H1 (cell line): ENCODE measurements at regions of chr10 and their contacts with region 1.

Region 1: DNA sequence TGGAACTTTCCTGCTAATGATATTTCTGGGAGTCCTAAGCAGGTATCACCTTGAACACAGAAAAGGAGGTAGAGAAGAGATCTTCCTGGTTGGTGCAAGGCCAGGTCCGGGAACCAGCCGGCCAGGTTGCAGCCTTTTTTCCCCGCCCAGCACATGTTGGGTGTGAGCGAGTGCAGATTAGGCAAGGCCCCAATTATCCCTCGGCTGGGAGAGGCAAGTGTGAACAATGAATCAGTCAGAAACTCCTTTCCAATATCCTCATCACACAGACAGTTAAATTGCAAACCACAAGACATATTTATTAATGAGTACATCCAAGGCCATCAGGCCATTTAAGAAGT is 115.0 kb upstream of the AFAP1L2 start:
- DNase-seq: no peak
- H3K4me3 ChIP-seq: no peak overlapping the region
- H3K27ac ChIP-seq: no peak overlapping the region
- H3K4me1 ChIP-seq: peaks cover 4 to 21% (median 9%) of the 10 kb centered on the region in 4 experiments
- H3K27me3 ChIP-seq: peaks cover 0 to 1% (median 0%) of the 10 kb centered on the region in 4 experiments; a peak in 1 of 7 replicates
- CTCF ChIP-seq: no peak
- EP300 ChIP-seq: no peak
- POLR2A ChIP-seq: no peak
- RAD21 ChIP-seq: no peak

Region 2: DNA sequence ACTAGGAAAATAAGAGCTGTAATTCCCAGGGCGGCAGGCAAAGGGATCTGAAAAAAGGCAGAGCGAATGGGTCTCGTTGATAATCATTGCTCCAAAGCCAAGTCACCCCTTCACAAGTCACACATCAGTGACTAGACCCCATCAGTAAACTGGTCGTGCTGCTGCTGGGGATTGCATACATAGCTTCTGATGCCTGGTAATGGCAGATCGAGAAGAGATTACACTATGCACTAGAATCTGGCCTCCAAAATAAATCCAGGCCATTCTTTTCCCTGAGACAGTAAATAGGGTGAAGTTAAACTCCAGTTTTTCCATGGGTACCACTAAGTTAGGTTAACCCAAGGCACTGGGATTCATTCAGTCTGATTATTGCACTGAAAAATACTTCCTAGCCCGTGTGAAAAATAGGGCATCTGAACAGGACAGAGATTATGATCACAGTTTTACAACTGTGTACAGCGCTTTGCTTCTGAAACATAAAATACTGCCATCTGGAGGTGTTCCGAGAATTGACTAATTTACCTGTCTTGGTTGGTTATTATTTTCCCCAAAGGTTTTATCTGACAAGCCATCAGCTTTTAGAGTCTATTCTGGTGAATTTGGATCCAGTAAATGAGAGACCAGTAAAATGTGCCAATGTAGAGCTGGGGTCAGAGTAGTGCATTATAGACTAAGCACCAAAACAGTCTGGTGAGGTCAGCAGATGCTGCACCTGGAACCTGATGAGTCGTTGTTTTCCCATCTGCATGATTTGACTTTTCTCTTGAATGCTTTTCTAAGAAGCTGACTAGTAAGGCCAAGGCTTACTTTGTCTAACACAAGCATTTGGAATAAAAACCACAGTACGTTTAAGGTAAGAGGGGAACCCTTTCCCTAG is 32.1 kb before region 1 on chr10:
- CTCF ChIA-PET with region 1: interaction called, 13 read pairs
- POLR2A ChIA-PET with region 1: no interaction called
- DNase-seq: no peak
- H3K4me3 ChIP-seq: no peak overlapping the region
- H3K27ac ChIP-seq: no peak overlapping the region
- H3K4me1 ChIP-seq: peaks cover 5 to 10% (median 7%) of the 10 kb centered on the region in 4 experiments; a peak in 5 of 7 replicates
- H3K27me3 ChIP-seq: no peaks in the 10 kb centered on the region
- CTCF ChIP-seq: peak in 1 of 3 experiments; percentile 22; a peak in 1 of 4 replicates
- EP300 ChIP-seq: no peak
- POLR2A ChIP-seq: no peak
- RAD21 ChIP-seq: 0 out of 4 replicates have a peak, but pooled peaks of 1 of the 2 experiments have one; percentile 10

Region 3: GRCh38 chr10:114498413-114499111 is 20.7 kb before region 1 on chr10:
- CTCF ChIA-PET with region 1: interaction called, 15 read pairs
- POLR2A ChIA-PET with region 1: no interaction called
- DNase-seq: no peak
- H3K4me3 ChIP-seq: no peak overlapping the region
- H3K27ac ChIP-seq: no peak overlapping the region
- H3K4me1 ChIP-seq: peaks cover 0 to 5% (median 0%) of the 10 kb centered on the region in 4 experiments; a peak in 2 of 7 replicates
- H3K27me3 ChIP-seq: no peaks in the 10 kb centered on the region
- CTCF ChIP-seq: no peak
- EP300 ChIP-seq: no peak
- POLR2A ChIP-seq: no peak
- RAD21 ChIP-seq: no peak

Region 4: GRCh38 chr10:114532226-114532625 is 13.0 kb after region 1 on chr10:
- CTCF ChIA-PET with region 1: interaction called, 16 read pairs
- POLR2A ChIA-PET with region 1: interaction called, 10 read pairs
- DNase-seq: no peak
- H3K4me3 ChIP-seq: no peak overlapping the region
- H3K27ac ChIP-seq: no peak overlapping the region
- H3K4me1 ChIP-seq: no peaks in the 10 kb centered on the region; a peak in 1 of 7 replicates
- H3K27me3 ChIP-seq: peaks cover 0 to 3% (median 0%) of the 10 kb centered on the region in 4 experiments; a peak in 2 of 7 replicates
- CTCF ChIP-seq: no peak
- EP300 ChIP-seq: no peak
- POLR2A ChIP-seq: no peak
- RAD21 ChIP-seq: no peak